ENCODE measurements at regions of chr14 and their contacts with region 1.

Region 1: GRCh38 chr14:92460916-92461579 is 52.5 kb upstream of the RIN3 start:
- DNase-seq: peak; percentile 89
- H3K4me3 ChIP-seq: no peak overlapping the region
- H3K27ac ChIP-seq: 0 out of 2 replicates have a peak overlapping the region, but pooled peaks have one; percentile 16
- H3K4me1 ChIP-seq: peaks cover 11% of the 10 kb centered on the region
- H3K27me3 ChIP-seq: no peaks in the 10 kb centered on the region

Region 2: GRCh38 chr14:92144708-92145107 is 316.3 kb before region 1 on chr14:
- in situ Hi-C with region 1: loop called (anchors 5 kb)
- DNase-seq: peak; percentile 37
- H3K4me3 ChIP-seq: no peak overlapping the region
- H3K27ac ChIP-seq: no peak overlapping the region
- H3K4me1 ChIP-seq: no peaks in the 10 kb centered on the region
- H3K27me3 ChIP-seq: no peaks in the 10 kb centered on the region

Region 3: GRCh38 chr14:92160619-92161018 is 300.4 kb before region 1 on chr14:
- in situ Hi-C with region 1: no loop called
- DNase-seq: peak; percentile 93
- H3K4me3 ChIP-seq: 0 out of 2 replicates have a peak overlapping the region, but pooled peaks have one; percentile 22
- H3K27ac ChIP-seq: peak overlapping the region; percentile 74
- H3K4me1 ChIP-seq: peaks cover 17% of the 10 kb centered on the region
- H3K27me3 ChIP-seq: no peaks in the 10 kb centered on the region